Aorta (tissue), 5 donors: ENCODE measurements at regions of chr2 and their contacts with region 1.

Region 1: GRCh38 chr2:26692279-26692896 is at the start of gene KCNK3:
- DNase-seq: peak; percentile 86 to 92
- ATAC-seq: peak; percentile 81
- H3K4me3 ChIP-seq: peak within 1 kb of the TSS in 1 of 2 donors; percentile 11
- H3K27ac ChIP-seq: peak within 1 kb of the TSS; percentile 36 to 91
- H3K4me1 ChIP-seq: no peaks in the 10 kb centered on the region
- H3K27me3 ChIP-seq: no peaks in the 10 kb centered on the region
- total RNA-seq, gene KCNK3: 8.7 to 14.7 TPM

Region 2: DNA sequence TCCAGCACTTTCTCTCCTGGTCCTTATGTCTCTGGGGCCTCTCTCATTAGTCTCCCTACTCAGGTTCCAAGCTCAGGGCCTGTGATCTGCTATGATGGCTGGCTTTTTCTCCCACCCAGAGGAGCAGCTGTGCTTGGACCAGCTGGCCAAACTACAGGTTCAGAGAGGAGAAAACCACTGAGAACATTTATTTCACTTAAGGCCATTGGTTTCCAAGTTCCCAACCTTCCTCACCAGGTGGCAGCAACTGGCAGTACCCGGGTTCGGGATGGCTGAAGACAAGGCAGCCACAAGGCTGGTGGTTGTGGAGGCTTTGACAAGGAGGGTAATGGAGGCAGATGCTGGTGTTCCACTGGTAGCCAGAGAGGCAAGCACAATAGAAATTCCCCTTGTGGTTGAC is 376.3 kb before region 1 on chr2:
- intact Hi-C with region 1: no loop called
- DNase-seq: no peak
- ATAC-seq: no peak
- H3K4me3 ChIP-seq: no peak overlapping the region
- H3K27ac ChIP-seq: no peak overlapping the region
- H3K4me1 ChIP-seq: no peaks in the 10 kb centered on the region
- H3K27me3 ChIP-seq: no peaks in the 10 kb centered on the region

Region 3: DNA sequence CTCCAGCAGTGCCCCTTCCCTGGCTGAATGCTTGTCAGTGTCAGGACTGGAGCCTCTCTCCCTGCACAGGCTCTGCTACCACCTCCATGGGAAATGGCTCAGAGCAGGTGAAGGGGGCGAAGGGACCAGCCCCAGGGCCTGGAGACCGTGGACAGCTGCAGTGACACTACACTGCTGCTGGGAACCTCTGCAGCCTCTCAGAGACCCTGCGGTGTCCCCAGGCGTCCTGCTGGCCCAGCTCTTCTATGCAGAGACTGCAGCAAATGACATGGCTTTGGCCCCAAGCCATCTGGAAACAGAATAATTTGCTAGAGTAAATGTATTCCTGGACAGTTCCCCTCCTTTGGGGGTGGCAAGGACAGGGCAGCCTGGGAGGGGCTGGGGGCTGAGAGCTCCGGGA is 104.4 kb before region 1 on chr2:
- intact Hi-C with region 1: no loop called
- DNase-seq: peak in 1 of 2 donors; percentile 59
- ATAC-seq: no peak
- H3K4me3 ChIP-seq: no peak overlapping the region
- H3K27ac ChIP-seq: no peak overlapping the region
- H3K4me1 ChIP-seq: no peaks in the 10 kb centered on the region
- H3K27me3 ChIP-seq: no peaks in the 10 kb centered on the region

Region 4: GRCh38 chr2:26612522-26613240 is 79.7 kb before region 1 on chr2:
- intact Hi-C with region 1: loop called in 1 of 2 experiments (anchors 5 kb)
- DNase-seq: peak in 1 of 2 donors; percentile 84
- ATAC-seq: no peak
- H3K4me3 ChIP-seq: no peak overlapping the region
- H3K27ac ChIP-seq: no peak overlapping the region
- H3K4me1 ChIP-seq: peaks cover 2 to 4% of the 10 kb centered on the region in 2 donors
- H3K27me3 ChIP-seq: no peaks in the 10 kb centered on the region

Region 5: GRCh38 chr2:26720322-26721166 is 28.2 kb after region 1 on chr2:
- intact Hi-C with region 1: loop called in 1 of 2 experiments (anchors 2 kb)
- DNase-seq: peak; percentile 92 to 97
- ATAC-seq: peak; percentile 82
- H3K4me3 ChIP-seq: no peak overlapping the region
- H3K27ac ChIP-seq: peak overlapping the region in 1 of 2 donors; percentile 32
- H3K4me1 ChIP-seq: no peaks in the 10 kb centered on the region
- H3K27me3 ChIP-seq: no peaks in the 10 kb centered on the region